SK-N-SH (cell line): ENCODE measurements at regions of chr1 and their contacts with region 1.

Region 1: DNA sequence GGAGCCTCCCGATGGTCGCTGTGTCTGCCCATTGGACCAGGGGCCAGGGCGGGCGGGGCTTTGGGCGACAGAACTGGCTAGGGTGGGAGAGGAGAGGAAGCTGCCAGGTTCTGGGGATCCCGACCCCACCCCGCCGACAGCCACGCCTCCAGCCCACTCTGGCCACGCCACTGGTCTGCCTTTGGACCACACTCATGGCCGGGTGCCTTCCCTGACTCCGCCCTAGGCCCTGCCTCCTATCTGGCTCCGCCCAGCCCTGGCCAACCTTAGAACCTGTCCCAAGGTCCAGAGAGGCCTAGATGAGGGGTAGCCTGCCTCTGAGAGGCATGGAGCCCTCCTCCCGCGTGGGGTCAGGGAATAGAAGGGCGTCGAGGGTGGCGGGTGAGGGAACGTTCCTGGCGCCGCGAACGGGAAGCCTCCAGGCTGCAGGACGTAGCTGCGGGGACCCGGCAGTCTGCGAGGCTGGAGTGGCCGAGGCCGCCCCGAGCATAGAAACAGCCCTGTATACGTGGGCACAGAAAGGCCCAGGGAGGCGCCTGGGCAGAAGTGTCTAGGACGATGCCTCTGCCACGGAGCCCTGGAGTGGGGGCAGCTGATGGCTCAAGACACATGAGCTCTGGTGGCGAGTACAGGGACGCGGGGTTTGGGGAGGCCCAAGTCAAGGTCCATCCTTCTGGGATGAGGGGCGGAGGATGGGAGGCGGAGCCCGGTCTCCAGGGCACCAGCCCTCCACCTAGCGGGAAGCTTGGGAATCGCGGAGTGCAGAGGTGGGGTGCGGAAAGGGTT is 11.5 kb upstream of the COL16A1 start:
- DNase-seq: peak; percentile 95
- H3K4me3 ChIP-seq: peak overlapping the region; percentile 44 to 50
- H3K27ac ChIP-seq: peak overlapping the region; percentile 94 to 95
- H3K4me1 ChIP-seq: peaks cover 41 to 54% of the 10 kb centered on the region in 2 experiments; a peak in 3 of 4 replicates
- H3K27me3 ChIP-seq: no peaks in the 10 kb centered on the region
- CTCF ChIP-seq: peak; percentile 79
- EP300 ChIP-seq: no peak
- RAD21 ChIP-seq: peak; percentile 66

Region 2: DNA sequence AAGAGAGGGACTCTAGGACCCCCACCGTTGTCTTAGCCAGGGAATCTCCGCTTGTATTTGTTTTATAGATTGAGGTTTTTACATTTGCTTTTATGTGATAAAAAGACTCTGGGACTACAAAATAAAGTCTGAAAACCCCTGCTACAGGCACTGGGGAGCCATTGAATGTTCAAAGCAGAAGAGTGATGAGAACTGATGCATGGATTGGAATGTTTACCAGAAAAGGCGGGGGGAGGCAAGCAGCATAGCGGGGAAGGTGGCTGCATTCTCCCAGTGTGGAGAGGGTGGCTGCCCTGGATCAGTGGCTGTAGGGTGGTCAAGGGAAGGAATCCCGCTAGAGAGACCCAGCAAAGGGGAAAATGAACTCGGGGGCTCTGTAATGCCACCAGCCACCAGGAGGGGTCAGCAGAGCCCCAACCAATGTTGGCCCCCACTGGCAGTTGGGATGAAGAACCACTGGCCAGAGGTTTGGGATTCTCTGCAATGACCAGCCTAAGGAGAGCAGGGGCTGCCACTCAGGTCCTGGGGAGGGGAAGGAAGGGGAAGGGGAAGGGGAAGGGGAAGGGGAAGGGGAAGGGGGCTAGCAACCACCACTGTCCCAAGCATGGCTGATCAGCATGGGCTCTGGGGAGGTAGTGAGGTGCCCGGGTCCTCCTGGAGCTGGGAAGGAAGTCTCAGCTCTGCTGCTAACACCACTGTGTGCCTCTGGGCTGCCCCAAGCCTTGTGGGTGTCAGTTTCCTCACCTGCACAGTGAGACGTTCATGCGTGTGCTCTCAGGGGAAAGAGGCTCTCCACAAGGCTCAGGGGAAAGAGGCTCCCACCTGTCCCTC is 51.4 kb before region 1 on chr1:
- CTCF ChIA-PET with region 1: interaction called, 134 read pairs
- POLR2A ChIA-PET with region 1: interaction called, 3 read pairs
- DNase-seq: peak; percentile 93
- H3K4me3 ChIP-seq: no peak overlapping the region; a peak in 1 of 4 replicates
- H3K27ac ChIP-seq: no peak overlapping the region
- H3K4me1 ChIP-seq: peaks cover 7 to 20% of the 10 kb centered on the region in 2 experiments; a peak in 2 of 4 replicates
- H3K27me3 ChIP-seq: no peaks in the 10 kb centered on the region
- CTCF ChIP-seq: peak; percentile 90
- EP300 ChIP-seq: no peak
- RAD21 ChIP-seq: peak; percentile 94

Region 3: DNA sequence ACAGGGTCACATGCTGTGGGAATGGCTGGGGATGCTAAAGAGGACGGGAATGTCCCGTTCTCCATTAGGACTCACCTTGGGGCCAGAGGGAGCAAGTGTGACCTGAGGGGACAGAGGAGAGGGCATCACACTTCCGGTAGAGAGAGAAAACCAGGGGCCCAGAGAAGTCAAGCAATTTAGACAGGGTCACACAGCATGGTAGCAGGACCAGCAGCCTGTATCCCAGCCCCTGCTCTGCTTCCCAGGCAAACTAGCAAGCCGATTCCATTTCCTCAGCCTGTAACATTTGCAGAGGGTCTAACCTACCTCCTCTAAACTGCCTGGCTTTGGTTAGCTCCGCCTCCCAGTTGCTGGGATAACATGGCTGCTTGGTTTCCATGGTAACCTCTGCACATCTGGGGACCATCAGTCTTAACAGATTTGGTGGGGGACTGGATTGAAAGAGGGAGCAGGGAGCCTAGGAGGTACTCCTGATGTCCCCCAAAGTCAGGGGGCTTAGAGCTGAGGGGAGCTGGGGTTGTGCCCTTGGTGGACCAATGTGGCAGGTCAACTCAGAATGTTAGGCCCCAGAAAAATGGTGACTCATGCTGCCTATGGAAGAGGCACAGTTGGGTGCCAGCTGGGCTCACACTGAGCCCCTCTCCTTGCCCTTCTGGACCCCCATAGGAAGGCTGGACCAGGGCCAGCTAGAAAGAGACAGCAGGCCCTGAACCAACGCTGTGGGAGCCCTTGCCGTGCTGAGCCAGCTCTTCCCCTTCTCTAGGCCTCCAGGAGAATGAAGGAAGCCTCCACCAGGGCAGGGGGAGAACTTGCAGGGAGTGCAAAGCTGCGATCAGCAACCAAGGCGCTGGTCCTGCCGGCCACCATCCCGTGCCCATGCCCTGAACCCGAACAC is 21.0 kb before region 1 on chr1:
- CTCF ChIA-PET with region 1: interaction called, 116 read pairs
- POLR2A ChIA-PET with region 1: interaction called, 4 read pairs
- DNase-seq: peak; percentile 75
- H3K4me3 ChIP-seq: no peak overlapping the region
- H3K27ac ChIP-seq: no peak overlapping the region
- H3K4me1 ChIP-seq: peaks cover 13 to 34% of the 10 kb centered on the region in 2 experiments; a peak in 3 of 4 replicates
- H3K27me3 ChIP-seq: no peaks in the 10 kb centered on the region
- CTCF ChIP-seq: no peak
- EP300 ChIP-seq: no peak
- RAD21 ChIP-seq: no peak

Region 4: DNA sequence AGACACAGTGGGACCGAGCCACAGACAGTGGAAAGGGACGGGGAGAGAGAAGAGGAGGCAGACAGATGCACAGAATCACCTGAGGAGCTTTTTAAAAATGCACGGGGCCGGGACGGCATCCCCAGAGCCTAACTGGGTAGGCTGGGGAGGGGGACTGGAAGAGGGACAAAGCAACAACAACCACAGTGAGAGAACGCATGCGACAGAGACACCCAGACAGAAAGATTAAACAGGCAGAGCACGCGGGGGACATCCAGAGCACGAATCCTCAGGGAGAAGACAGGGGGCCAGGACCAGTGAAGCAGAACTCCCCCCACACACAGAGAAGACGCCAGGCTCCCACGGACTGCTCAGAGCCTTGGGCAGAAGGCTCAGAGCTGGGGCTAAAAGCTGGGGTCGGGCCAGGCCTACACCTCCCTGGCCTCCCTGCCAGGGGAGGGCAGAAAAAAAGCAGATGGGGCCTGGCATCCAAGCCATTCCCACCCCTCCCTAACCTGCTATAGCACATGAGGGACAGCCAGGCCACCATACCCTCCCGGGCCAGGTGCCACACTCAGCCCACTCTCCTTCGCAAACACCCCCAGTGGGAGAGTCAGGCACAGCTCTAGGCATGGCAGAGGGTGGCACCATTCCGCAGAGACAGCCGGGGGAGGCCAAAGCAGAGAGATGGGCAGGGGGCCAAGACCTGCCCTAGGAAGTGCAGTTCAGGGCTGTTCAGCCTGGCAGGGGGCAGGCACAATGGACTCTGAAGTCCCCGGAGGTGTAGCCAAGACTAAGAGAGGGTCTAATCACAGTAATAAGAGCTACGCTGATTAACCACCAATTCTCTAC is 18.3 kb after region 1 on chr1:
- CTCF ChIA-PET with region 1: interaction called, 42 read pairs
- POLR2A ChIA-PET with region 1: no interaction called
- DNase-seq: peak; percentile 89
- H3K4me3 ChIP-seq: no peak overlapping the region
- H3K27ac ChIP-seq: peak overlapping the region in 1 of 2 experiments; percentile 75; a peak in 2 of 4 replicates
- H3K4me1 ChIP-seq: peaks cover 8 to 20% of the 10 kb centered on the region in 2 experiments; a peak in 2 of 4 replicates
- H3K27me3 ChIP-seq: no peaks in the 10 kb centered on the region
- CTCF ChIP-seq: no peak
- EP300 ChIP-seq: no peak
- RAD21 ChIP-seq: no peak

Region 5: GRCh38 chr1:31745096-31745945 is 30.0 kb after region 1 on chr1:
- CTCF ChIA-PET with region 1: interaction called, 156 read pairs
- POLR2A ChIA-PET with region 1: interaction called, 3 read pairs
- DNase-seq: peak; percentile 89
- H3K4me3 ChIP-seq: no peak overlapping the region; a peak in 1 of 4 replicates
- H3K27ac ChIP-seq: peak overlapping the region in 1 of 2 experiments; percentile 18; a peak in 1 of 4 replicates
- H3K4me1 ChIP-seq: peaks cover 0 to 45% of the 10 kb centered on the region in 2 experiments; a peak in 1 of 4 replicates
- H3K27me3 ChIP-seq: no peaks in the 10 kb centered on the region
- CTCF ChIP-seq: peak; percentile 80
- EP300 ChIP-seq: no peak
- RAD21 ChIP-seq: peak; percentile 78